A549 (cell line): ENCODE measurements at regions of chr7 and their contacts with region 1.

Region 1: DNA sequence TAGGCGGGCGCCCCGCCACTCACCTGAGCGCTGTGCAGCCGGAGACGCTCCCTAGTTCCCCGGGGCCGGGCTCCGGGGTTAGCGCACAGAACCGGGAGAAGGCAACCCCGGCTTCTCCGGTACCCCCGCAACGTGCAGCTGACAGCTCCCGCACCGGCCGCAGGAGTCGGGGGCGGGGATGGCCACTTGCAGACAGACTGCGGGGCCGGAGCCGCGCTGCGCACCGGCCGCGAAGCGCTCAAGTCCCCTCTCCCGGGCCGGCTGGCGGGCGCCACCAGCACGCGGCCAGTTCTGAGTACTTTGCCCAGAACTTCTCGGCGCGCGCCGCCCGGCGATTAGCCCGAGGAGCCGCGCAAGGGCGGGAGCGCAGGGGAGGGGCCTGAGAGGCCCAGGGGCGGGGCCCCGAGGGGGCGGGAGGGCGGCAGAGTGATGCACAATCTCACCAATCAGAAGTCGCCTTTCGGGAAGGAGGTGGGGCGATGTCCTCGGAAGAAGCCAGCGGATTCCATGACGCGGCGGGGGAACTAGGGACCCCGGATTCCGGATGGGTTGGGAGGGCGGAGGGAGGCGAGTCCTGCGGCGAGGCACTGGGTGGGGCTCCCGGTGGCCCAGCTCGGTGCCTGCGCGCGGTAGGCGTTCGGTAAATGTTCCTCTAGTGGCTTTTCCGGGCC is at the start of gene OSBPL3:
- DNase-seq: peak; percentile 79 to 94
- ATAC-seq: peak; percentile 78 to 89
- H3K4me3 ChIP-seq: peak within 1 kb of the TSS; percentile 75
- H3K27ac ChIP-seq: peak within 1 kb of the TSS; percentile 81 to 90
- H3K4me1 ChIP-seq: peaks cover 15% of the 10 kb centered on the region; the same call in 2 of the 3 replicates
- CTCF ChIP-seq: no peak
- EP300 ChIP-seq: no peak
- POLR2A ChIP-seq: peak; percentile 57
- RAD21 ChIP-seq: peak; percentile 2 to 3; a peak in 1 of 5 replicates
- polyA plus RNA-seq, gene OSBPL3: 17.4 and 17.8 TPM in 2 replicates

Region 2: GRCh38 chr7:24812310-24812945 is 167.6 kb before region 1 on chr7:
- CTCF ChIA-PET with region 1: interaction called, 31 read pairs
- POLR2A ChIA-PET with region 1: no interaction called
- DNase-seq: peak; percentile 40 to 50
- ATAC-seq: peak; percentile 96 to 97
- H3K4me3 ChIP-seq: no peak overlapping the region
- H3K27ac ChIP-seq: no peak overlapping the region
- H3K4me1 ChIP-seq: no peaks in the 10 kb centered on the region
- CTCF ChIP-seq: peak; percentile 87
- EP300 ChIP-seq: no peak
- POLR2A ChIP-seq: no peak
- RAD21 ChIP-seq: peak; percentile 80 to 81

Region 3: GRCh38 chr7:24825931-24826661 is 153.9 kb before region 1 on chr7:
- CTCF ChIA-PET with region 1: interaction called, 76 read pairs
- POLR2A ChIA-PET with region 1: interaction called, 32 read pairs
- DNase-seq: peak; percentile 82 to 86
- ATAC-seq: peak; percentile 80 to 89; a peak in 5 of 6 replicates
- H3K4me3 ChIP-seq: no peak overlapping the region
- H3K27ac ChIP-seq: peak overlapping the region; percentile 77 to 85
- H3K4me1 ChIP-seq: peaks cover 59% of the 10 kb centered on the region
- CTCF ChIP-seq: no peak
- EP300 ChIP-seq: no peak
- POLR2A ChIP-seq: no peak
- RAD21 ChIP-seq: no peak

Region 4: GRCh38 chr7:24896031-24896501 is 83.9 kb before region 1 on chr7:
- CTCF ChIA-PET with region 1: interaction called, 18 read pairs
- POLR2A ChIA-PET with region 1: no interaction called
- DNase-seq: no peak
- ATAC-seq: no peak
- H3K4me3 ChIP-seq: no peak overlapping the region
- H3K27ac ChIP-seq: no peak overlapping the region
- H3K4me1 ChIP-seq: no peaks in the 10 kb centered on the region
- CTCF ChIP-seq: no peak
- EP300 ChIP-seq: no peak
- POLR2A ChIP-seq: no peak
- RAD21 ChIP-seq: no peak

Region 5: GRCh38 chr7:24991353-24991752 is 11.4 kb after region 1 on chr7:
- CTCF ChIA-PET with region 1: interaction called, 28 read pairs
- POLR2A ChIA-PET with region 1: no interaction called
- DNase-seq: no peak
- ATAC-seq: no peak
- H3K4me3 ChIP-seq: no peak overlapping the region
- H3K27ac ChIP-seq: no peak overlapping the region
- H3K4me1 ChIP-seq: no peaks in the 10 kb centered on the region
- CTCF ChIP-seq: no peak
- EP300 ChIP-seq: no peak
- POLR2A ChIP-seq: no peak
- RAD21 ChIP-seq: no peak

Region 6: GRCh38 chr7:25098096-25099046 is 118.4 kb after region 1 on chr7:
- CTCF ChIA-PET with region 1: interaction called, 53 read pairs
- POLR2A ChIA-PET with region 1: interaction called, 6 read pairs
- DNase-seq: peak; percentile 81 to 83
- ATAC-seq: peak; percentile 72 to 81; a peak in 3 of 6 replicates
- H3K4me3 ChIP-seq: no peak overlapping the region
- H3K27ac ChIP-seq: 0 out of 6 replicates have a peak overlapping the region, but pooled peaks of 1 of the 2 experiments have one; percentile 21
- H3K4me1 ChIP-seq: peaks cover 6% of the 10 kb centered on the region; the same call in 1 of the 3 replicates
- CTCF ChIP-seq: peak; percentile 95
- EP300 ChIP-seq: no peak
- POLR2A ChIP-seq: no peak
- RAD21 ChIP-seq: peak; percentile 85 to 88

Region 7: DNA sequence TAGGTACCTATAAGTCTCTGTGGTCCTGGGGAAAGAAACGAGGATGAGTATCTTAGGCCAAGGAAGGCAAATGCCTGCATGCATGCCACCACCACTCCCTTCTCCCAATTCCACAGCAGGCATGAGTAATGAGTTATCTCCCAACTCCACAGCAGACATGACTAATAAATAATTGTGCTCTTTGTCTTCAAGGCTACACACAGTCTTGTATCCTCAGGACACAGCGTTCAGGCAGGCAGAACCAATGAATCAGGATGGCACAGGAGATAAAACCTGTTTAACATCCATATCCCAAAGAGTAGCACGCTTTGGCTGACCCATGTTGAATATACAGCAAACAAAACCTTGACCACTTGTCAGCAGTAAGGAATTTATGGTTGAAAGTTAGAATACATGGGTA is 942.3 kb after region 1 on chr7:
- CTCF ChIA-PET with region 1: no interaction called
- POLR2A ChIA-PET with region 1: no interaction called
- DNase-seq: no peak
- ATAC-seq: peak; percentile 34; a peak in 3 of 6 replicates
- H3K4me3 ChIP-seq: no peak overlapping the region
- H3K27ac ChIP-seq: no peak overlapping the region
- H3K4me1 ChIP-seq: no peaks in the 10 kb centered on the region
- CTCF ChIP-seq: no peak
- EP300 ChIP-seq: no peak
- POLR2A ChIP-seq: no peak
- RAD21 ChIP-seq: no peak